ENCODE measurements at regions of chr12 and their contacts with region 1.

Region 1: DNA sequence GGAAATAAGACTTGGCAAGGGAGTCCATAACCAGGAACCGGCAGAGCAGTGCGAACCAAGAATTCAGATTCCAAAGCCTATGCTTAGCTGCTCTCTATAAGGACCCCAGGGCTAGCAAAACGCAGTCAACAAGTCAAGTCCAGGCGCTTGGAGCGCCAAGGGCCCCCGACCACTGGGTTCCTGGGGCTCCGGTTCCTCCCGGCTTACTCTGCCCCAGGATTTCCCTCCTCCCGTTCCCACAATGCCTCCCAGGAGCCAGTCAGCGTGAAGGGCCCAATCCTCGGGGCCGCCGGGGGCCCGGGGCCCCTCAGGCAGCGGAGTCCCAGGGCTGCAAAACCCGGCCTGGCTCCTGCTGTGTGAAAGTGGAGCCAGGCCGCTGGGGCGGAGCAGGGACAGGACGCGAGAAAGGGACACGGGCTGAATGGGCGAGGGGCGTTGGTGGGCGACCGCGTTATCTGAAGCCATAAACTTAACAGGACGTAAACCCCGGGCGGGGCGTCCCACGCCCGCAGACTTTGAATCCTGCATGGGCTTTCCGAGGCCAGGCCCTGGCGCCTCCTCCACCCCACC is 1.5 kb downstream of the KRT8 start:
- H3K4me3 ChIP-seq: peak overlapping the region; percentile 68
- H3K27ac ChIP-seq: peak overlapping the region; percentile 54
- H3K4me1 ChIP-seq: peaks cover 18% of the 10 kb centered on the region
- CTCF ChIP-seq: no peak

Region 2: DNA sequence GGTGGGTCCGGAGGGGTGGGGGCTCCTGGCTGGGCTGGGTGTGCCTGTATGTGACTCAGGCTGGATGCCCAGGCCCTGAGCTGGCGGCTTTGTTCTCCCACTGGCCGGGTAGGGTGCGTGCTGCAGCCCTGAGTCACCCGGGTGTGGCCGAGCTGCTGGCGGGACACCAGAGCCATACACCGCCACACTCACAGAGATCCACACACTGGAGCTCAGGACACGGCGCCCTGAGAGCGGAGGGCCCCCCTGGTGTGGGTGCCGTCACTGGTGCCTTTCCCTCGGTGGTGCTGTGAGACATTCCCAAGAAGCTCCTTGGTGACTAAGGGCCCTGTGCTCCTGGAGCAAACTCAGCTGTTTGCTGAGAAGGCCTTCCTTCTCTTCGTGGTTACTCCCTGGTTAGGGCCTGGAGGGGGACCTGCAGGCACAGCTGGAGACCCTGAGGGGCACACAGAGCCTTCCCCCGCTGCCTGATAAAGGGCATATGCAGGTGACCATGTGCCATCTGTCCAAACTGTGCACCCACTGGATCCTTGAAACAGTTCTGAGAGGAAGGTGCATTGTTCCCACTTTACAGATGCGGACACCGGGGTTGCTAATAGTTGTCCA is 755.9 kb before region 1 on chr12:
- CTCF ChIA-PET with region 1: no interaction called
- POLR2A ChIA-PET with region 1: interaction called, 12 read pairs
- H3K4me3 ChIP-seq: no peak overlapping the region
- H3K27ac ChIP-seq: no peak overlapping the region
- H3K4me1 ChIP-seq: no peaks in the 10 kb centered on the region; the same call in 1 of the 2 replicates
- CTCF ChIP-seq: no peak

Region 3: GRCh38 chr12:52916216-52916615 is 12.8 kb after region 1 on chr12:
- CTCF ChIA-PET with region 1: interaction called, 11 read pairs
- POLR2A ChIA-PET with region 1: interaction called, 22 read pairs
- H3K4me3 ChIP-seq: no peak overlapping the region
- H3K27ac ChIP-seq: no peak overlapping the region
- H3K4me1 ChIP-seq: no peaks in the 10 kb centered on the region
- CTCF ChIP-seq: no peak

Region 4: DNA sequence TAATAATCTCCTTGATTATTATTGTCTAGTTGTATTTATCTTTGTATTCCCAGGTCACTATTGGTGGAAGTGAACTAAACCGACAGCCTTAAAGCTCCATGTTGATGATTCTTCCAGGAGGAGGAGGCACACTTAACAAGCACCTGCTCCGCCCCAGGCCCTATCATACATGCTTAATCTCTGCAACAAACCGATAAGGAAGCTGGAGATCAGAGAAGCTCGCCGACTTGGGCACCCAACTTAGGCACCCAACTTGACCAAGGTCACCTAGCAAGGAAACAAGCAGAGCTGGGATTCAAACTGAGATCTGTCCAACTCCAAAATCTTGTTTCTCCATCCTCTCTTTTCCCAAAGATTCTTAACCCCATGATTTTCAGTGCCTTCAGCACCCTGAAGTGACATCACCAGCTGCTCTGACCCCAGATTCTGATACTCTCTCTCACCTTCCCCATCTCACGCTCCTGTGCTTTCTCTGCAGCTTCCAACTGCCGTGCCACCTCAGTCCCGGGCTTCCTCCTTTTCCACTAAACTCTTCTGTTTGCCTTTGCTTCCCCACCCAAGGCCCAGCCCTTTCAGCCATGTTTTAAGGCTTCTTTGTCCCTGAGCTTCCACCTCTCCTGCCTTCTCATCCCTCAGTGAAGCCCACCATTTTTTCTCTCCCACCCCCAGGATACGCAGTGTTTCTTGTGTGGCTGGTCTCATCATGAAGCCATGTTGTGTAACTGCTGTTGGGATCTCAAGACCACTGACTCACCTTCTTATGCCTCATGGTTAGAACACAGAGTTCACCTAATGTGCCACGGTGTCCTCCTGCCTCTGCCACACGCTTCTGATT is 38.9 kb after region 1 on chr12:
- CTCF ChIA-PET with region 1: interaction called, 28 read pairs
- POLR2A ChIA-PET with region 1: interaction called, 202 read pairs
- H3K4me3 ChIP-seq: no peak overlapping the region
- H3K27ac ChIP-seq: no peak overlapping the region
- H3K4me1 ChIP-seq: peaks cover 7% of the 10 kb centered on the region; the same call in 1 of the 2 replicates
- CTCF ChIP-seq: no peak

Region 5: DNA sequence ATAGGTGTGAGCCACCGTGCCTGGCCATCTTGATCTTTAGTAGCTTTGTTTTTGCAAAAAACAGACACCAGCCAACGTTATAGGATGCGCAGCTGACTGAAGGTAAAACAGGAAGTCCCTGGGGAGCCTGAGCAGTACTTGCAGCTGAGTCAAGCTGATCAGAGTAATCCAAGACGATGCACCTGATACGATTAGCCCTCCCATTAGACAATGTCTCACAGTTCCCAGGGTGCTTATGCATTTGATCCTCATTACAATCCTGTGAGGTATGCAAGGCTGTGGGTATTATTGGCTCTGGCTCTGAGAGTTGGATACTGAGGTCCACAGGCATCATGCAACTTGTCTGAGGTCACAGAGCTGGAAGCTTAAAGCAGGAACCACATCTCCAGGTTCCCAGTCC is 53.6 kb after region 1 on chr12:
- CTCF ChIA-PET with region 1: interaction called, 19 read pairs
- POLR2A ChIA-PET with region 1: interaction called, 27 read pairs
- H3K4me3 ChIP-seq: no peak overlapping the region
- H3K27ac ChIP-seq: no peak overlapping the region
- H3K4me1 ChIP-seq: no peaks in the 10 kb centered on the region
- CTCF ChIP-seq: no peak

Region 6: GRCh38 chr12:53005986-53006809 is 102.8 kb after region 1 on chr12 and contains the start of gene EIF4B:
- CTCF ChIA-PET with region 1: interaction called, 4 read pairs
- POLR2A ChIA-PET with region 1: interaction called, 25 read pairs
- H3K4me3 ChIP-seq: peak within 1 kb of the TSS; percentile 65
- H3K27ac ChIP-seq: peak within 1 kb of the TSS; percentile 94
- H3K4me1 ChIP-seq: peaks cover under 1% of the 10 kb centered on the region
- CTCF ChIP-seq: no peak; the same call in 1 of the 2 replicates